ENCODE measurements at regions of chr5 and their contacts with region 1.

Region 1: DNA sequence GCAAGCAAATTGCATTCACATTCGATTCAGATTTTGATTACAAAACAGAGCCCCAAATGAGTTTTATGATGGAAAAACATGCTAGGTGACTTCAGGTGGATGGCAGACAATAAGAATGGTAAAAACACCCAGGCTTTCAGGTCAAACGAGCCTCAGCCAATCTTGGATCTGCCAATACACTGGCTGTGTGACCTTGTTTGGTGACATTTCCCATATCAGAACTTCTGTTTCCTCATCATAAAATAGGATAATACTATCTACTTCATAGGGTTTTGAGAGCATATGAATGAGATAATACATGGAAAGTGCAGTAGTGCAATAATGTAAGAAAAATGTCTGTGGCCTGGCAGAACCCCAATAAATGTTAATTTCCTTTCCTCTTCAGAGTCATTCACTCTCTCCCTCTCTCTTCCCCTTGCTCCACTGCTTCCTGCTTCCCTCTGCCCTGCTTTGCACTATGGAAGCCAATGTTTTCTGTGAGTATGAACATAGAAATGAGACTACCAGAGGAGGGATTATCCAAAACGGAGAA is 54.7 kb downstream of the SH3RF2 start:
- DNase-seq: no peak
- CTCF ChIP-seq: no peak

Region 2: DNA sequence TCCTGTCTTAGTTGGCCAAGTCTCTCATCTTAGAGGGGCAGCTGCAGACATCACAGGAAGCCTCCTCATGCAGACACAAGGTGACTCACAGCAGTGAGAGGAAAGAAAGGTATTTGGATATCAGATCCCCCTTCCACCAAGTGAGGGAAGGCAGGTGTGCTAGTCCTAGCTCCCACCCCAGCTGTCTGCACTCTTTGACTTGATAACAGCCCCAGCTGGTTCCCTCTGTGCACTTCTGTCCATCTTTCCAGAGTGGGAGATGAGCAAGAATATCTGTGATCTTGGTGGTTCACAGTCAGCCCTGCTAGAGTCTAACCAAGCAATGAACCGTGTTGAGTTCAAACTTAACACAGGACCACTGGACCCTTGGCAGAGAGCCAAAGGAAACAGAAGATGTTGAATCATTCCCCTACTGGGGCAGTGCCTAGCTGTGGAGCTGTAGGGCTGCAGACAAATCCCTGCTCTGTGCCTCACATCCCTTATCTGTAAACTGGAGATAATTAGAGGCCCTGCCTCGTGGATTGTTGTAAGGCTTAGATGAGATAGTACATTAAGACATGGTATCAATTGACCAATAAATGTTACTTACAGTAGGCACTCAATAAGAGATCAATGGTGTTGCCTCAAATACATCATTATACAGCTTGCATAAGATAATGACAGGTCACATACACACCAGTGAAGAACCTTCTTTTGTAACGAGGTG is 15.6 kb before region 1 on chr5:
- CTCF ChIA-PET with region 1: interaction called, 10 read pairs
- POLR2A ChIA-PET with region 1: no interaction called
- DNase-seq: no peak
- CTCF ChIP-seq: no peak

Measured in GM10248 (cell line).